Sciatic nerve (tissue), 2 donors: ENCODE measurements at regions of chr12 and their contacts with region 1.

Region 1: DNA sequence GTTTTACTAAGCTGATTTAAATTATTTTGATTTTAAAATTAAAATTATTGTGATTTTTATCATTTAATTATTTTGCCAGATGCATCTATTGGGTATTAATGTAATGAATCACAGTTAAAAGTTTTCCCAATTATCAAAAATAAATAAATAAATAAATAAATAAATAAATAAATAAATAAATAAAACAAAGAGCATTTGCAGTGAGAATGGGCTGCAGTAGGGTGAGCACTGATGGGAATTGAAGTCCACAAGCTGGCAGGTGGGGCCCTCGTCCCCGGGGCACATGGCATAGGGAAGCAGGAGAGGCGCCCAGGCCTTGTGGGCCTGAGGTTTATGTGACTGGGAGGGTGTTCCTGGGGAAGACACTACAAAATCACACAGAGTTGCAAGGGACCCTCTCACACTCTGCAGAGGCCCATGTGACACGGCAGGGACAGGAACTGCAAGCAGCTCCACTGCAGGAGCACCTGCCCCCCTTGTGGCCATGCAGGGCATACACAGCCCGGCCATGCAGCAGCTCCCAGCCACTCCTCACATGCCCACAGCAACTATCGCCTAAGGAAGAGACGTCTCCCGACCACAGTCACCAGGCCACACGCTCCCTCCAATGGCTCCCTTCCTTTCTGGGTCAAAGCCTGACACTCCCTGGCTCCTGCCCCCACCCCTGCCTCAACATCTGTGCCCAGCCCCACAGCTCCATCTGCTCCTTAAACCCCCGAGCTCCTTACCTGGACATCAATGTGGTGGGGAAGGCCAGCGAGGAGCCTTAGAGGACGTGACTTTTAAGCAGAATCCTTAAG is 256.3 kb upstream of the SFSWAP start:
- DNase-seq: no peak
- ATAC-seq: peak; percentile 85

Region 2: DNA sequence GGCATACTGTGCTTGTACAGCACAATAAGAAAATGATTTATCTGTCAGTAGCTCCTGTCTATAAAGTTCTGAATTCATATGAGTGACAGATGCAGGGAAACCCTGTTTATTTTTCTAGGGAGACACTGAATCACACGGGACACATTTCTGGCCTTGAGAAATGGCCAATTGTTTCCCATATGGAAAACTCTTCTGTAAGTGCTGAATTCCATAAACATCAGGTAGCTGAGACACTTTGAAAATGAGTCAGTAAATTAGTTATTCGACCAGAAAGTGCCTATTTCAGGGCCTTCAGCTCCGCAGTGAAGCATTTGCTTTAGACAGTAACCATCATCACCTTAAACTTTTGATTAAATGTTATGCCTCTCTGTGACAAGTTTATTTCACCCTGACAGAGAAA is 1735.2 kb before region 1 on chr12:
- intact Hi-C with region 1: no loop called
- DNase-seq: no peak
- ATAC-seq: no peak

Region 3: GRCh38 chr12:131104463-131105350 is 349.9 kb before region 1 on chr12:
- intact Hi-C with region 1: loop called (anchors 10 kb)
- DNase-seq: peak; percentile 96
- ATAC-seq: peak; percentile 91

Region 4: DNA sequence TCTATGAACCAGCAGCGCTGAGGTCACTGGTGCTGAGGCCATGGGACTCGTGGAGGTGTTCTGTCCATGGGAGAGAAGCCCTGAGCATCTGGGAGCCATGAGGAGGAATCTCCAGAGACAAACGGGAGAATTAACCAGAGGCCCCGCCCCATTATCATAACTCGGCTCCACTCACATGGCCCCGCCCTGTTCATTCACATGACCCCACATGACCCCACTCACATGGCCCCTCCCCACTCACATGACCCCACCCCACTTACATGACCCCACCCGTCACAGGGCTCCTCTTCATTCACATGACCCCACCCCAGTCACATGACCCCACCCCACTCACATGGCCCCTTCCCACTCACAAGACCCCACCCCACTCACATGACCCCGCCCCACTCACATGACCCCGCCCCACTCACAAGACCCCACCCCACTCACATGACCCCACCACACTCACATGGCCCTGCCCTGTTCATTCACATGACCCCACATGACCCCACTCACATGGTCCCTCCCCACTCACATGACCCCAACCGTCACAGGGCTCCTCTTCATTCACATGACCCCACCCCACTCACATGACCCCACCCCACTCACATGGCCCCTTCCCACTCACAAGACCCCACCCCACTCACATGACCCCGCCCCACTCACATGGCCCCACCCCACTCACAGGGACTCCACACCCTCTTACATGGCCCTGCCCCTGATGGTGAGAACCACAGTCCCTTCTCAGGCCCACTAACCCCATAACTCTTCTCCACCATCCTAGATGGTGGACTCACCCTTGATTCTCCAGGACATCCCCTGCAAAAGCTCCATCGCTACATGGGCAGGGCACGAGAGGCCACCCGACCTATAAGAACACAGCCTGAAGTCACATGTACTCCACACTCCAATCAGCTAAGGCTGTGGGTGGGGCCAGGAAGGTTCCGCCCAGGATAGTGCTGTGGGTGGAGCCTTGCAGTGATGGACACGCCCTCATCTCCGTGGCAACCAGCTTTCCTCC is 105.2 kb after region 1 on chr12:
- intact Hi-C with region 1: no loop called
- DNase-seq: no peak
- ATAC-seq: no peak